ENCODE measurements at regions of chr13 and their contacts with region 1.

Region 1: DNA sequence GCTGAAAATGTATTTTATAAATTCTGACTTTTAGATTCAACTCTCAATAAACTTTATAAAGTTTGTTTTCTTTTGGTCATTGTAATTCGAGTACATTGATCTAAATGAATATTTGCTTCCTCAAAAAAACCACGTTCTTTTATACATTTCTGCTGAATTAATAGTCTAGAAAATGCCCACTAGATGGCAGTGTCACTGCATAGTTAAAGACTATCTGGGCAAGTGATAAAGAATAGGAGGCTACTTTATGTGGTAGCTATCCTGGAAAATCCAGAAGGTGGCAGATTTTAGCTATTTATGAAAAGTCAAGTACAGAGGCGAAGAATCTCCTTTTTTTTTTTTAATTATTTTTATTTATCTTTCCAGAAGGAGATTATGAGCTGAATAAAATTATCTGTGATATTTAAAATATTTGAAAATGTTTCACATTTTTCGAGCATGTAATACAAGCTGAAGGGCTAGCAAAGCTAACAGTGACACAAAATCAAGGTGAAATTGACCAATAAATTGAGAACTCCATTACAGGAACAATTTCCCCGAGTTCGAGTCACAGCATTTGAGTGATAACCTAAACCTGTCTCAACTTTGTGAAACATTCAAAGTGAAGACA is 221.8 kb downstream of the OLFM4 start:
- DNase-seq: peak; percentile 16
- ATAC-seq: peak; percentile 49
- H3K4me3 Mint-ChIP-seq: no peak overlapping the region
- H3K27ac Mint-ChIP-seq: no peak overlapping the region
- H3K4me1 Mint-ChIP-seq: no peaks in the 10 kb centered on the region
- H3K27me3 Mint-ChIP-seq: no peaks in the 10 kb centered on the region
- CTCF ChIP-seq: peak; percentile 70

Region 2: GRCh38 chr13:52994865-52995264 is 255.5 kb before region 1 on chr13:
- CTCF ChIA-PET with region 1: no interaction called
- POLR2A ChIA-PET with region 1: no interaction called
- intact Hi-C with region 1: no loop called
- DNase-seq: no peak
- ATAC-seq: no peak
- H3K4me3 Mint-ChIP-seq: no peak overlapping the region
- H3K27ac Mint-ChIP-seq: no peak overlapping the region
- H3K4me1 Mint-ChIP-seq: no peaks in the 10 kb centered on the region
- H3K27me3 Mint-ChIP-seq: peaks cover 5% of the 10 kb centered on the region
- CTCF ChIP-seq: no peak

Region 3: DNA sequence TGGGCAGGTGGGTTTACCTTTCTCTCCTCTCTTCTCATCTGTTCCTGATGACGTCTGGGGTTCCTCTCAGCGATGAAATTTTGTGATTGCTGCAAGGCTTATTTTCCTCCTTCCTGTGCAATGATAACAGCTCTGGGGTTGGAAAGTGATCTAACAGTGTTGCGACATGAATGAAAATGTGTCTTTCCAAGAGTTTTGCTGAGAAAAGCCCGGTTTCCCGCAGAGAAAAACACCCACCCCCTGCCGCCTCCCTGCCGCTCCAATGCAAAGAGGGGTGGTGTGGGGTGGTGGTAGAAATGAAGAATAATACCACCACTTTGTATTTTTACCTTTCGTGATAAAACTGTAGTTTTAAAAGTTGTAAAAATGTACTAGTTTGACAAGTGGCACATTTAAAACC is 10.2 kb after region 1 on chr13:
- CTCF ChIA-PET with region 1: interaction called, 11 read pairs
- POLR2A ChIA-PET with region 1: interaction called, 4 read pairs
- intact Hi-C with region 1: no loop called
- DNase-seq: no peak
- ATAC-seq: no peak
- H3K4me3 Mint-ChIP-seq: no peak overlapping the region
- H3K27ac Mint-ChIP-seq: no peak overlapping the region
- H3K4me1 Mint-ChIP-seq: no peaks in the 10 kb centered on the region
- H3K27me3 Mint-ChIP-seq: peaks cover 3% of the 10 kb centered on the region
- CTCF ChIP-seq: no peak

Region 4: GRCh38 chr13:53269644-53270043 is 19.3 kb after region 1 on chr13:
- CTCF ChIA-PET with region 1: interaction called, 10 read pairs
- POLR2A ChIA-PET with region 1: no interaction called
- intact Hi-C with region 1: no loop called
- DNase-seq: no peak
- ATAC-seq: no peak
- H3K4me3 Mint-ChIP-seq: no peak overlapping the region
- H3K27ac Mint-ChIP-seq: no peak overlapping the region
- H3K4me1 Mint-ChIP-seq: no peaks in the 10 kb centered on the region
- H3K27me3 Mint-ChIP-seq: no peaks in the 10 kb centered on the region
- CTCF ChIP-seq: no peak